ENCODE measurements at regions of chr15 and their contacts with region 1.

Region 1: GRCh38 chr15:63146669-63147068 is 10.6 kb downstream of the RPS27L start:
- DNase-seq: no peak
- H3K4me3 ChIP-seq: no peak overlapping the region
- H3K27me3 ChIP-seq: no peaks in the 10 kb centered on the region
- CTCF ChIP-seq: 0 out of 2 replicates have a peak, but pooled peaks have one; percentile 12

Region 2: GRCh38 chr15:63135804-63136203 is 10.9 kb before region 1 on chr15:
- CTCF ChIA-PET with region 1: interaction called, 5 read pairs
- POLR2A ChIA-PET with region 1: interaction called, 19 read pairs
- DNase-seq: peak; percentile 74
- H3K4me3 ChIP-seq: no peak overlapping the region
- H3K27me3 ChIP-seq: no peaks in the 10 kb centered on the region
- CTCF ChIP-seq: no peak